Adrenal gland (tissue), 19 donors: ENCODE measurements at regions of chr9 and their contacts with region 1.

Region 1: GRCh38 chr9:88593537-88594185 is 58.7 kb downstream of the NXNL2 start:
- DNase-seq: peak; percentile 66 to 85 (median 76)
- H3K4me3 ChIP-seq: no peak overlapping the region
- H3K27ac ChIP-seq: no peak overlapping the region
- H3K4me1 ChIP-seq: peaks cover 0 to 3% of the 10 kb centered on the region in 2 donors
- H3K27me3 ChIP-seq: no peaks in the 10 kb centered on the region
- CTCF ChIP-seq: peak; percentile 72 to 84 (median 79)
- POLR2A ChIP-seq: no peak

Region 2: DNA sequence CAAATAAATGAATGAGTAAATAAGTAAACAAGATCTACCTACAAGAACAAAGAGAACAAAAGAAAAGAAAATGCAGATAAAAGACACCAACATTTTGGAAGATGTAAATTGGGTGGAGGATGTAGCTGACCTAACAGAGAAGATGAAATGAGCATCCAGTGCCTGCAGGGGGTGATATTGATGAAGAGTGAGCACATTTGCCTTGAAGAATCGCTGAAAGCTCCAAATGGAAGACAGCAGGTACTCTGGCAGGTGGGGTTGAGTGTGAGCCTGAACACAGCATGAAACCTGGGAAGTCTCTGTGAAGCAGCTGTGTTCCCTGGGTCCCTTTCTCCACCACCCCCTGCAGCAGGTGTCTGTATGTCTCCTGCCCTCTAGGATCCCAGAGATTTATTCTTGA is 67.0 kb after region 1 on chr9:
- intact Hi-C with region 1: no loop called
- DNase-seq: peak in 2 of 7 donors; percentile 21 to 31
- H3K4me3 ChIP-seq: no peak overlapping the region
- H3K27ac ChIP-seq: no peak overlapping the region
- H3K4me1 ChIP-seq: peaks cover 0 to 6% of the 10 kb centered on the region in 2 donors
- H3K27me3 ChIP-seq: no peaks in the 10 kb centered on the region
- CTCF ChIP-seq: peak in 3 of 6 experiments; percentile 38 to 48 (median 41)
- POLR2A ChIP-seq: no peak

Region 3: GRCh38 chr9:88747768-88748167 is 154.1 kb after region 1 on chr9:
- intact Hi-C with region 1: loop called in 1 of 2 experiments (anchors 10 kb)
- DNase-seq: peak in 6 of 7 donors; percentile 55 to 81 (median 66)
- H3K4me3 ChIP-seq: no peak overlapping the region
- H3K27ac ChIP-seq: peak overlapping the region in 3 of 5 donors; percentile 1 to 52 (median 45)
- H3K4me1 ChIP-seq: peaks cover 0 to 22% of the 10 kb centered on the region in 2 donors
- H3K27me3 ChIP-seq: no peaks in the 10 kb centered on the region
- CTCF ChIP-seq: peak in 1 of 6 experiments; percentile 18
- POLR2A ChIP-seq: no peak

Region 4: DNA sequence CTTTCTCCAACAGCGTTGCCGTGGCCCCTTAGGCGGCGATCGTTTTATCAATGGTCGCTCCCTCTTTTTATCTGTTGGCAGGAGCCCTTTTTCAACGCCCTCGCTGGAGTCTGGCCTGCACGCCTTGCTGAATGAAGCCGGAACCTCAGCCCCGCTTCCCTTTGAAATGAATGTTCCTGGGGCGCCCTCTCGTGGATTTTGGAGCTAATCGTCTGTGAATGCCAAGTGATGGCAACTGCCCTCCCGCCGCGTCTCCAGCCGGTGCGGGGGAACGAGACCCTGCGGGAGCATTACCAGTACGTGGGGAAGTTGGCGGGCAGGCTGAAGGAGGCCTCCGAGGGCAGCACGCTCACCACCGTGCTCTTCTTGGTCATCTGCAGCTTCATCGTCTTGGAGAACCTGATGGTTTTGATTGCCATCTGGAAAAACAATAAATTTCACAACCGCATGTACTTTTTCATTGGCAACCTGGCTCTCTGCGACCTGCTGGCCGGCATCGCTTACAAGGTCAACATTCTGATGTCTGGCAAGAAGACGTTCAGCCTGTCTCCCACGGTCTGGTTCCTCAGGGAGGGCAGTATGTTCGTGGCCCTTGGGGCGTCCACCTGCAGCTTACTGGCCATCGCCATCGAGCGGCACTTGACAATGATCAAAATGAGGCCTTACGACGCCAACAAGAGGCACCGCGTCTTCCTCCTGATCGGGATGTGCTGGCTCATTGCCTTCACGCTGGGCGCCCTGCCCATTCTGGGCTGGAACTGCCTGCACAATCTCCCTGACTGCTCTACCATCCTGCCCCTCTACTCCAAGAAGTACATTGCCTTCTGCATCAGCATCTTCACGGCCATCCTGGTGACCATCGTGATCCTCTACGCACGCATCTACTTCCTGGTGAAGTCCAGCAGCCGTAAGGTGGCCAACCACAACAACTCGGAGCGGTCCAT is 407.6 kb after region 1 on chr9:
- intact Hi-C with region 1: loop called (anchors 2 to 5 kb)
- DNase-seq: peak; percentile 89 to 97 (median 94)
- H3K4me3 ChIP-seq: no peak overlapping the region
- H3K27ac ChIP-seq: peak overlapping the region in 3 of 5 donors; percentile 34 to 69 (median 68)
- H3K4me1 ChIP-seq: peaks cover 5 to 43% of the 10 kb centered on the region in 2 donors
- H3K27me3 ChIP-seq: no peaks in the 10 kb centered on the region
- CTCF ChIP-seq: peak; percentile 55 to 91 (median 86)
- POLR2A ChIP-seq: no peak